ENCODE measurements at regions of chr6 and their contacts with region 1.

Region 1: DNA sequence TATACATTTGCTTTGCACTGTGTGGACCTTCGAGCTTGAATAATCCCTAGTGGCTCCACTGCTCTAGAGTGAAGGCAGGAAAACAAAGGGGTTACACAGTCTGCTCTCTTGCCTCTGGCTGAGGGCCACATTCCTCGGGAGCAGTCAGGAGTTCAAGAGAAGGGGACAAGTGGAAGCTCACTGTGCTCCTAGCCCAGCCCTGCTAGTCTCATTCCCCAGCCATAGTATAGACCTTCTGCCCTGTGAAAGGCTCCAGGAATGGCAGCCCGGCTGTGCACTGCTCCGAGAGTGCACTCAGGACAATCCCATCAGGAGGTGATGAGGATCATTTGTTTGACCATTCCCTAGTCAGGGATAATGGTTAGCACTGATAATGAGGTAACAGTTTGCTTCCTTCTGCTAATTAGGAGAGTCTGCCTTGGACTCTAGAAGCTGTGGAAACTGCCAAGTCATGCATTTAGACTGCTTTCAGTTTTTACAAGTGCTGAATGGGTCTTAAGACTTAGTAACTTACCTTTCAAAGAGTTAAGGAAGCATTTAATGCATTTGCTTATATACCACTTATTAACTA is 8.5 kb downstream of the IYD start:
- DNase-seq: no peak

Region 2: GRCh38 chr6:149362289-149362688 is 1015.0 kb before region 1 on chr6:
- intact Hi-C with region 1: no loop called
- DNase-seq: no peak

Region 3: GRCh38 chr6:150354754-150355571 is 22.3 kb before region 1 on chr6:
- intact Hi-C with region 1: loop called in 1 of 2 experiments (anchors 1 kb)
- DNase-seq: no peak